H1 (cell line): ENCODE measurements at regions of chr19 and their contacts with region 1.

Region 1: DNA sequence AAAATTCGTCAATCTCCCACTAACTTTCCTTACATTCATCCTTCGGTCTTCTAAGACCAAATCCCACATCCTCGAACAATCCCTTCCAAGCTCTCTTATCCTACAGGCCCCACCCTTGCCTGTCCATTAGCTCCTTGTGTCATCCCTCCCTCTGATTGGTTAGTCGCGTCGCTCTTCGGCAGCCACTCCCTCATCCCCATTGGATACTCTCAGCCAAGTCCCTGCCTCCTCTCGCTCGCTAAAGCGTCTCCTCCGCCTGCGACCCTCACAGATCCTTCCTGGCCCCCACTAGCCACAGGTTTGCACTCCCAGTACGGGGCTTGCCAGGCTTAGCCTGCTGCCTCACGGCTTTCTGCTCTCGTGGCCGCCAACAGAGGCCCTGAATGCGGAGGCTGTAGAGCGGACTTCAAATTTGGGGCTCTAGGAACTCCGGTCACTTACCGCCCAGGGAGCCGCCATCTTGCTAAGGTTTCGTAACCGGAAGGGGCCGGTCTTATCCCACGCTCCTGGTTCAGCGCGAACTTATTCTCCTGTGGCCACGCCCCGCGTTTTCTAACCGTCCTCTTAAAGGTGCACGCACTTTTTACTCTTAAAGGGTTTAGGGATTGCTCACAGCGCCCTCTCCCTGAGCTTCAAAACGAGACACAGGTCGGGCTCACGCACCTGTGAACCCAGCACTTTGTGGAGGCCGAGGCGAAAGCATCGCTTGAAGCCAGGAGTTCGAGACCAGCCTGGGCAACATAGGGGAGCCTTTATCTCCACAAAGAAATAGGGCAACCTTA is at the start of gene DMAC2:
- DNase-seq: peak; percentile 92 to 96
- H3K4me3 ChIP-seq: peak within 1 kb of the TSS; percentile 81 to 99 (median 90)
- H3K27ac ChIP-seq: peak within 1 kb of the TSS; percentile 98
- H3K4me1 ChIP-seq: no peaks in the 10 kb centered on the region
- H3K27me3 ChIP-seq: no peaks in the 10 kb centered on the region
- CTCF ChIP-seq: peak; percentile 47 to 76 (median 72)
- EP300 ChIP-seq: no peak
- POLR2A ChIP-seq: peak; percentile 79 to 98
- RAD21 ChIP-seq: peak; percentile 27 to 41; a peak in 3 of 4 replicates
- total RNA-seq, gene DMAC2: 86.8 and 92.2 TPM in 2 replicates

Region 2: GRCh38 chr19:41376241-41376997 is 63.2 kb before region 1 on chr19 and contains the start of gene TMEM91:
- CTCF ChIA-PET with region 1: interaction called, 3 read pairs
- POLR2A ChIA-PET with region 1: interaction called, 10 read pairs
- DNase-seq: peak in 1 of 2 experiments; percentile 85
- H3K4me3 ChIP-seq: peak within 1 kb of the TSS; percentile 61 to 82 (median 71)
- H3K27ac ChIP-seq: no peak within 1 kb of the TSS
- H3K4me1 ChIP-seq: peaks cover 0 to 5% (median 4%) of the 10 kb centered on the region in 4 experiments; a peak in 5 of 7 replicates
- H3K27me3 ChIP-seq: peaks cover 0 to 9% (median 2%) of the 10 kb centered on the region in 4 experiments; a peak in 4 of 7 replicates
- CTCF ChIP-seq: no peak
- EP300 ChIP-seq: no peak
- POLR2A ChIP-seq: peak in 1 of 2 experiments; percentile 40; a peak in 2 of 3 replicates
- RAD21 ChIP-seq: no peak
- total RNA-seq, gene TMEM91: 4.2 and 5.3 TPM in 2 replicates

Region 3: DNA sequence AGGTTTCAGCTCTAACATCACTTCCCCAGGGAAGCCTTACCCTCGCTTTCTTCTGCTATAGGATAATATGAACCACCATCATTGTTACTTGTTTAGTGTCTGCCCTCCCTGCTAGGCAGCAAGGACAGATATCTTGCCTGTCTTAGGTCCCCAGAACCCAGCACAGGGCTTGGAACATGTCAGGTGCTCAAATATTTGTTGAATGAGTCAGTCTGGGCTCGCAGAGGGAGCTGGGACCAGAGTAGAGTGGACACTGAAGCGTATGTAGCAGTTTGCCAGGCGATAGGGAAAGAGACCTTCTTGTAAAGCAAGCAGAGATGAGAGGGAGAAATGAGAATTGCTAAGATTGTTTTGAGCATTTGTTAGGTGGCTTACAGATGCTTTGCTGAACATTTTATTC is 30.3 kb before region 1 on chr19:
- CTCF ChIA-PET with region 1: interaction called, 7 read pairs
- POLR2A ChIA-PET with region 1: interaction called, 13 read pairs
- DNase-seq: no peak
- H3K4me3 ChIP-seq: no peak overlapping the region
- H3K27ac ChIP-seq: no peak overlapping the region
- H3K4me1 ChIP-seq: peaks cover 0 to 5% (median 1%) of the 10 kb centered on the region in 4 experiments; a peak in 5 of 7 replicates
- H3K27me3 ChIP-seq: no peaks in the 10 kb centered on the region; a peak in 1 of 7 replicates
- CTCF ChIP-seq: no peak
- EP300 ChIP-seq: no peak
- POLR2A ChIP-seq: no peak
- RAD21 ChIP-seq: no peak

Region 4: DNA sequence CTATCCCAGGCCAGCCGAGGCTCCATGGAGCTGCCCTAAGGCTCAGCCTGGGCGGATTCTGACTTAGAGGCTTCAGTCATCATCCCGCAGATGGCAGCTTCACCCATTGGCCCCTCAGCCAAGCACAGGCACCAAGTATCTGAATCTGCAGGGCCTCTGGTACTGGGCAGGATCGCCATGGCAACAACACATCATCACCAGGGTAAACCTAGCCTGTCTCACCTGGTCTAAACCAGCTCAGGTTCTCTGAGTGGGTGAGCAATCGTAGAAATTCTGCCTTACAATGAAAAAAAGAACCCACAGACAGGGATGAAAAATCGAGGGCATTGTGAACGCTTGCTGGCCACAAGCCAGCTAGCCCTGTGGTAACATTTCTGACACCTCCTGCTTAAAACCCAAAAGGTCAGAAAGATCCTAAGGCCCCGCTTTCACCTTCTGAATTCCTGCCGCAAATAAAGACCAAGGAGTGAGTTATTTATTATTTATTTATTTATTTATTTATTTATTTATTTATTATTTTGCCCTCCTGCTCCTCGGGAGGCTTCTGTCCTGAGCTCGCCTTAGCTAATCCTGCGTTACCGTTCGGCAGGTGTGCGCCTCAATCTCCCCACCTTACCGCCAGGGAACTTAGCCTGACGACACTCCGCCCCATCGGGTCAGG is 124.4 kb after region 1 on chr19:
- CTCF ChIA-PET with region 1: interaction called, 364 read pairs
- POLR2A ChIA-PET with region 1: interaction called, 10 read pairs
- DNase-seq: no peak
- H3K4me3 ChIP-seq: peak overlapping the region in 1 of 4 experiments; percentile 50; a peak in 3 of 8 replicates
- H3K27ac ChIP-seq: no peak overlapping the region
- H3K4me1 ChIP-seq: peaks cover 0 to 9% (median 3%) of the 10 kb centered on the region in 4 experiments; a peak in 3 of 7 replicates
- H3K27me3 ChIP-seq: peaks cover 8 to 34% (median 25%) of the 10 kb centered on the region in 4 experiments
- CTCF ChIP-seq: no peak
- EP300 ChIP-seq: no peak
- POLR2A ChIP-seq: no peak
- RAD21 ChIP-seq: no peak

Region 5: DNA sequence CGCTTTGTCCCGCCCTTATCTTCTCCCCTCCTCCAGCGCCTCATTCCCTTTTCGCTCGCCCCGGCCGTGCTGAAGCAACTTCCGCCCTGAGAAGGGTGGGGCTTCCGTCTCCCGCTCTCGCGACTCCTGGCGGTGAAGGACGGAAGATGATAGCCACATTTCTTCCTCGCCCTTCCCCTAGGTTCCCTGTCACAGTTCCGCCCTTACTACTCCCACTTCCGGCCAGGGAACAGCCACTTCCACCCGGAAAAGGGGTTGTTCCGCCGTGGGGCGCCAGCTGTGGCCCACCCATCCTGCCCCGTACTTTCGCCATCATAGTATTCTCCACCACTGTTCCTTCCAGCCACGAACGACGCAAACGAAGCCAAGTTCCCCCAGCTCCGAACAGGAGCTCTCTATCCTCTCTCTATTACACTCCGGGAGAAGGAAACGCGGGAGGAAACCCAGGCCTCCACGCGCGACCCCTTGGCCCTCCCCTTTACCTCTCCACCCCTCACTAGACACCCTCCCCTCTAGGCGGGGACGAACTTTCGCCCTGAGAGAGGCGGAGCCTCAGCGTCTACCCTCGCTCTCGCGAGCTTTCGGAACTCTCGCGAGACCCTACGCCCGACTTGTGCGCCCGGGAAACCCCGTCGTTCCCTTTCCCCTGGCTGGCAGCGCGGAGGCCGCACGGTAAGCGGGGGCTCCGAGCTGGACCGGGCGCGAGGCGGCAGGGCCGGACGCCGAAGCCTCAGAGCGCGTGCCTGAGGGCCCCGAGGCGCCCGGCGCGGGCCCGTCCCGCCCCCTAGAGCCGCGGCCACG is 420.2 kb after region 1 on chr19 and contains the start of gene RPS19:
- CTCF ChIA-PET with region 1: no interaction called
- POLR2A ChIA-PET with region 1: interaction called, 10 read pairs
- DNase-seq: peak; percentile 98 to 99
- H3K4me3 ChIP-seq: peak within 1 kb of the TSS; percentile 81 to 99 (median 96)
- H3K27ac ChIP-seq: peak within 1 kb of the TSS; percentile 95
- H3K4me1 ChIP-seq: peaks cover 3 to 26% (median 14%) of the 10 kb centered on the region in 4 experiments
- H3K27me3 ChIP-seq: no peaks in the 10 kb centered on the region
- CTCF ChIP-seq: peak; percentile 45 to 76 (median 54)
- EP300 ChIP-seq: no peak
- POLR2A ChIP-seq: peak; percentile 92 to 96
- RAD21 ChIP-seq: no peak
- total RNA-seq, gene RPS19: 2,817 and 2,831 TPM in 2 replicates